GM23248 (cell line): ENCODE measurements at regions of chr2 and their contacts with region 1.

Region 1: DNA sequence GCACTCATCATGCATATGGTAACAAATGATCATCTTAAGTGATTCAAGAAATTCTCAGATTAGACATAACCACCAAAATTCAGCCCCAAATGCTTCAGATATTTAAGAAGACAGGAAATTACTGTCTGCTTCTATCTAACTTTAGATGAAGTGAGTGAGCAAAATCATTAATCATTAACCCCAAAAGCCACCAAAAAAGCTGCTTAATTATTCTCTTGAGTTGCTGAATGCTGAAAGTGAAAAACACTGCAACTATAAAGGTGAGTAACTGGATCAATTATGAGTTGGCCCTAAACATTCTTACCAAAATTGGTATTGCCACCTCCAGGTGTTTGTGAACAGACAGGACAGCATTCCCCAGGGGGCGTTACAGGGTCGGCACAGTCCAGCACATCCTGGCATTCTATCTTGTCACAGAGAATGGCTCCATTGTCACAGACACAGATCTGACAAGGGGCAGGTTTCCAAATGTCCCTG is 69.6 kb downstream of the COL5A2 start:
- DNase-seq: no peak
- H3K4me3 ChIP-seq: no peak overlapping the region
- H3K27ac ChIP-seq: peak overlapping the region; percentile 31
- H3K4me1 ChIP-seq: peaks cover 59% of the 10 kb centered on the region
- H3K27me3 ChIP-seq: no peaks in the 10 kb centered on the region

Region 2: DNA sequence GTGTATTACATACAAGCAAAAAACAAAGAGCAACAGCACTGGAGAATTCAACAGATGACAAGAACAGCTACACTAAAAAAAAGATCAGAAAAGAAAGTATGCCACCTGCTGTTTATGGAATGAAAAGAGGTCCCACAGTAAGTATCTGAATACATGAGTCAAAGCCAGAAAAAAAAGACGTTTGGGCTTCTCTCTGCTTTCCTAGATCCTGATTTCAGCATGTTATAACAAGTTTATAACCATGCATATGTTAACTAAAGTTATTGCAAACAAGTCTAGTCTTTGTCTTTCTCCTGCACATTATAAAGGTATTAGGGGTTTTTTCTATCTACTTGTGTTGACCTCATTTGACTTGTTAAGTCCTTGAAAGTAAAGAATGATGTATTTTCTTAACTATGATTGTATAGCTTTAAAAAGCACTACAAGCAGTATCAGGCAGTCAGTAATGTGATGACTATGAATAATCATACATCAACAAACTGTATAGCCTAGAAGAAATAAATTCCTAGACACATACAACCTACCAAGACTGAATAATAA is 178.1 kb after region 1 on chr2:
- in situ Hi-C with region 1: loop called (anchors 10 kb)
- DNase-seq: peak; percentile 87
- H3K4me3 ChIP-seq: no peak overlapping the region
- H3K27ac ChIP-seq: peak overlapping the region; percentile 88
- H3K4me1 ChIP-seq: peaks cover 41% of the 10 kb centered on the region
- H3K27me3 ChIP-seq: no peaks in the 10 kb centered on the region